WTC11 (cell line): ENCODE measurements at regions of chr4 and their contacts with region 1.

Region 1: GRCh38 chr4:21790438-21791029 is 158.0 kb downstream of the KCNIP4 start:
- DNase-seq: no peak
- ATAC-seq: no peak
- H3K4me3 Mint-ChIP-seq: no peak overlapping the region
- H3K27ac Mint-ChIP-seq: no peak overlapping the region
- H3K4me1 Mint-ChIP-seq: peaks cover 7% of the 10 kb centered on the region
- H3K27me3 Mint-ChIP-seq: no peaks in the 10 kb centered on the region
- CTCF ChIP-seq: peak; percentile 63

Region 2: GRCh38 chr4:21802406-21802805 is 11.9 kb after region 1 on chr4:
- CTCF ChIA-PET with region 1: interaction called, 12 read pairs
- POLR2A ChIA-PET with region 1: no interaction called
- DNase-seq: no peak
- ATAC-seq: no peak
- H3K4me3 Mint-ChIP-seq: no peak overlapping the region
- H3K27ac Mint-ChIP-seq: no peak overlapping the region
- H3K4me1 Mint-ChIP-seq: no peaks in the 10 kb centered on the region
- H3K27me3 Mint-ChIP-seq: no peaks in the 10 kb centered on the region
- CTCF ChIP-seq: no peak

Region 3: DNA sequence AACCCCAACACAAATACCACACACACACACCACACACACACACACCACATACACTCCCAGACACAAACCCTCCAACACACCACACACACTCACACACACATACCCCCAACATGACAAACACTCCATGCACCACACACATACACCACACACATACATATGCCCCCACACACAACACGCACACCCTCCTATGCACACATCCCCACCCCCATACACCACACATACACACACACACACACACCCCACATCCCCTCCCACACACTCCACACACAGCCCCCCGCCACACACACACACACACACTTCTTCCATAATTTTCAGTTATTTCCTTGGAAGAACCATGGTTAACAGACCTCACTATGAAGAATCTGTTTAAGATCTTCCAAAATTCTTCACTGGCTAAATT is 331.5 kb after region 1 on chr4:
- CTCF ChIA-PET with region 1: no interaction called
- POLR2A ChIA-PET with region 1: interaction called, 13 read pairs
- DNase-seq: no peak
- ATAC-seq: no peak
- H3K4me3 Mint-ChIP-seq: no peak overlapping the region
- H3K27ac Mint-ChIP-seq: no peak overlapping the region
- H3K4me1 Mint-ChIP-seq: no peaks in the 10 kb centered on the region
- H3K27me3 Mint-ChIP-seq: no peaks in the 10 kb centered on the region; the same call in 1 of the 2 replicates
- CTCF ChIP-seq: no peak

Region 4: GRCh38 chr4:22356987-22357596 is 566.6 kb after region 1 on chr4:
- CTCF ChIA-PET with region 1: interaction called, 26 read pairs
- POLR2A ChIA-PET with region 1: no interaction called
- DNase-seq: no peak
- ATAC-seq: peak; percentile 86
- H3K4me3 Mint-ChIP-seq: no peak overlapping the region
- H3K27ac Mint-ChIP-seq: no peak overlapping the region
- H3K4me1 Mint-ChIP-seq: peaks cover 14% of the 10 kb centered on the region
- H3K27me3 Mint-ChIP-seq: no peaks in the 10 kb centered on the region; the same call in 1 of the 2 replicates
- CTCF ChIP-seq: no peak

Region 5: GRCh38 chr4:22434895-22435294 is 644.4 kb after region 1 on chr4:
- CTCF ChIA-PET with region 1: interaction called, 11 read pairs
- POLR2A ChIA-PET with region 1: no interaction called
- DNase-seq: peak; percentile 45
- ATAC-seq: peak; percentile 98
- H3K4me3 Mint-ChIP-seq: no peak overlapping the region
- H3K27ac Mint-ChIP-seq: peak overlapping the region; percentile 92
- H3K4me1 Mint-ChIP-seq: peaks cover 30% of the 10 kb centered on the region
- H3K27me3 Mint-ChIP-seq: no peaks in the 10 kb centered on the region
- CTCF ChIP-seq: no peak